Upper lobe of right lung (tissue), 1 donor: ENCODE measurements at regions of chr1 and their contacts with region 1.

Region 1: GRCh38 chr1:58783993-58784757 is at the start of gene JUN:
- DNase-seq: peak; percentile 100
- ATAC-seq: peak; percentile 89
- H3K4me3 ChIP-seq: peak within 1 kb of the TSS; percentile 77
- H3K27ac ChIP-seq: peak within 1 kb of the TSS; percentile 99
- H3K4me1 ChIP-seq: peaks cover 29% of the 10 kb centered on the region
- H3K27me3 ChIP-seq: no peaks in the 10 kb centered on the region
- CTCF ChIP-seq: no peak
- total RNA-seq, gene JUN: 112 TPM

Region 2: GRCh38 chr1:59146651-59147358 is 362.6 kb after region 1 on chr1:
- intact Hi-C with region 1: loop called (anchors 10 kb)
- DNase-seq: peak; percentile 70
- ATAC-seq: peak; percentile 73
- H3K4me3 ChIP-seq: peak overlapping the region; percentile 54
- H3K27ac ChIP-seq: peak overlapping the region; percentile 70
- H3K4me1 ChIP-seq: peaks cover 42% of the 10 kb centered on the region
- H3K27me3 ChIP-seq: no peaks in the 10 kb centered on the region
- CTCF ChIP-seq: peak; percentile 29